OCI-LY7 (cell line): ENCODE measurements at regions of chr4 and their contacts with region 1.

Region 1: GRCh38 chr4:88514557-88515511 is 8.7 kb downstream of the PYURF start:
- DNase-seq: no peak
- H3K4me3 ChIP-seq: no peak overlapping the region
- H3K27ac ChIP-seq: no peak overlapping the region
- H3K4me1 ChIP-seq: no peaks in the 10 kb centered on the region
- CTCF ChIP-seq: no peak

Region 2: GRCh38 chr4:87679449-87680169 is 835.2 kb before region 1 on chr4:
- CTCF ChIA-PET with region 1: no interaction called
- POLR2A ChIA-PET with region 1: interaction called, 4 read pairs
- intact Hi-C with region 1: loop called (anchors 5 kb)
- DNase-seq: peak; percentile 38
- H3K4me3 ChIP-seq: no peak overlapping the region
- H3K27ac ChIP-seq: no peak overlapping the region
- H3K4me1 ChIP-seq: no peaks in the 10 kb centered on the region
- CTCF ChIP-seq: peak; percentile 92

Region 3: GRCh38 chr4:88010966-88011365 is 503.9 kb before region 1 on chr4:
- CTCF ChIA-PET with region 1: no interaction called
- POLR2A ChIA-PET with region 1: no interaction called
- intact Hi-C with region 1: loop called (anchors 1 kb)
- DNase-seq: no peak
- H3K4me3 ChIP-seq: no peak overlapping the region
- H3K27ac ChIP-seq: no peak overlapping the region
- H3K4me1 ChIP-seq: peaks cover 14% of the 10 kb centered on the region
- CTCF ChIP-seq: no peak

Region 4: GRCh38 chr4:88033309-88033708 is 481.5 kb before region 1 on chr4:
- CTCF ChIA-PET with region 1: no interaction called
- POLR2A ChIA-PET with region 1: no interaction called
- intact Hi-C with region 1: loop called (anchors 2 kb)
- DNase-seq: peak; percentile 65
- H3K4me3 ChIP-seq: no peak overlapping the region
- H3K27ac ChIP-seq: no peak overlapping the region
- H3K4me1 ChIP-seq: no peaks in the 10 kb centered on the region
- CTCF ChIP-seq: peak; percentile 82

Region 5: GRCh38 chr4:88217920-88218319 is 296.9 kb before region 1 on chr4:
- CTCF ChIA-PET with region 1: interaction called, 11 read pairs
- POLR2A ChIA-PET with region 1: no interaction called
- intact Hi-C with region 1: loop called (anchors 1 kb)
- DNase-seq: no peak
- H3K4me3 ChIP-seq: no peak overlapping the region
- H3K27ac ChIP-seq: no peak overlapping the region
- H3K4me1 ChIP-seq: no peaks in the 10 kb centered on the region
- CTCF ChIP-seq: no peak

Region 6: GRCh38 chr4:88456757-88457306 is 58.0 kb before region 1 on chr4 and contains the start of gene HERC5:
- CTCF ChIA-PET with region 1: no interaction called
- POLR2A ChIA-PET with region 1: no interaction called
- intact Hi-C with region 1: loop called (anchors 5 kb)
- DNase-seq: peak; percentile 80
- H3K4me3 ChIP-seq: peak within 1 kb of the TSS; percentile 66
- H3K27ac ChIP-seq: no peak within 1 kb of the TSS
- H3K4me1 ChIP-seq: peaks cover 11% of the 10 kb centered on the region
- CTCF ChIP-seq: peak; percentile 44
- total RNA-seq, gene HERC5: 0.18 TPM in 1 of 2 replicates, not detected in the other